Psoas muscle (tissue), 8 donors: ENCODE measurements at regions of chr5 and their contacts with region 1.

Region 1: GRCh38 chr5:109365653-109366052 is 44.1 kb downstream of the PJA2 start:
- DNase-seq: no peak
- ATAC-seq: no peak
- H3K4me3 ChIP-seq: no peak overlapping the region
- H3K27ac ChIP-seq: no peak overlapping the region
- H3K4me1 ChIP-seq: peaks cover 7% of the 10 kb centered on the region
- H3K27me3 ChIP-seq: no peaks in the 10 kb centered on the region
- CTCF ChIP-seq: no peak

Region 2: GRCh38 chr5:109404428-109404960 is 38.8 kb after region 1 on chr5:
- intact Hi-C with region 1: loop called (anchors 5 kb)
- DNase-seq: no peak
- ATAC-seq: no peak
- H3K4me3 ChIP-seq: no peak overlapping the region
- H3K27ac ChIP-seq: no peak overlapping the region
- H3K4me1 ChIP-seq: peaks cover 53% of the 10 kb centered on the region
- H3K27me3 ChIP-seq: no peaks in the 10 kb centered on the region
- CTCF ChIP-seq: no peak

Region 3: DNA sequence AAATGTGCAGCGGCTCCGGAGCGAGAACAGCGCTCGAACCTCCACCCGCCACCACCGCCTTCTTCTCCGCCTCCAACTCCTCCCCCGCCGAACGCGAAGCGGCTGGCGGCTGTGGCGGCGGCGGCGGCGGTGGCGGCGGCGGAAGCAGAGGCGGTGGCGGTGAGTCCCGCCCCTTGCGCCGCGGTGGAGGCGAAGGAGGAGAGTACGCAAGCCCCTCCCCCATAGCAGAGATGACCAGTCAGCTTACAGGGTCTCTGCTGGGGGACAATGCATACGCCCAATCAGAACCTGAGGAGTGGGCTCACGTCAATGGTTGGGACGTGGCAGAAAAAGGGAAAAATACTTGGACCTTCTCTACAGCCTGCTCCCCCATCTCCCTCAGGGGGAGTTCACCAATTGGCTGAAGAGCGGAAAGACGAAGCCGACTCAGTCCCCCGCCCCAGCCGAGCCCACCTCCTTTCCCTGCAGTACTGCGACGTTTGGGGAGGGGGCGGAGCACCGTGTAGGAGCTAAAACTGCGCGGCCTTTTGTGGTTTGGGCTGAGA is 44.3 kb after region 1 on chr5 and contains the start of gene PJA2:
- intact Hi-C with region 1: loop called in 1 of 2 experiments (anchors 5 kb)
- DNase-seq: peak; percentile 98
- ATAC-seq: peak; percentile 92 to 97 (median 94)
- H3K4me3 ChIP-seq: peak within 1 kb of the TSS; percentile 90
- H3K27ac ChIP-seq: peak within 1 kb of the TSS; percentile 98
- H3K4me1 ChIP-seq: peaks cover 44% of the 10 kb centered on the region
- H3K27me3 ChIP-seq: no peaks in the 10 kb centered on the region
- CTCF ChIP-seq: peak; percentile 37
- total RNA-seq, gene PJA2: 39.3 to 66.9 (median 51.3) TPM

Region 4: DNA sequence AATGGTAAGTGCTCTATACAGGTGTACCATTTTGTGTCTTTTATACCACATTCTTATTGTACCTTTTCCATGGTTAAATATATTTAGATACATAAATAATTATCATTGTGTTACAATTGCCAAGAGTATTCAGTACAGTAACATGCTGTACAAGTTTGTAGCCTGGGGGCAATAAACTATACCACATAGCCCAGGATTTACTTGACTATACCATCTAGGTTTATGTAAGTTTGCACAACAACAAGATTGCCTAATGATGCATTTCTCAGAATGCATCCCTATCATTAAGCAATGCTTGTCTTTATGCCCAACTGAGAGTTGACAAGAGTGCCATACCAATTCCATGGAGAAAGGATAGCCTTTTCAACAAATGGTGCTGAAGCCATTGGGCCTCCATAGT is 180.8 kb after region 1 on chr5:
- intact Hi-C with region 1: no loop called
- DNase-seq: no peak
- ATAC-seq: no peak
- H3K4me3 ChIP-seq: no peak overlapping the region
- H3K27ac ChIP-seq: no peak overlapping the region
- H3K4me1 ChIP-seq: no peaks in the 10 kb centered on the region
- H3K27me3 ChIP-seq: no peaks in the 10 kb centered on the region
- CTCF ChIP-seq: no peak